ENCODE measurements at regions of chr2 and their contacts with region 1.

Region 1: DNA sequence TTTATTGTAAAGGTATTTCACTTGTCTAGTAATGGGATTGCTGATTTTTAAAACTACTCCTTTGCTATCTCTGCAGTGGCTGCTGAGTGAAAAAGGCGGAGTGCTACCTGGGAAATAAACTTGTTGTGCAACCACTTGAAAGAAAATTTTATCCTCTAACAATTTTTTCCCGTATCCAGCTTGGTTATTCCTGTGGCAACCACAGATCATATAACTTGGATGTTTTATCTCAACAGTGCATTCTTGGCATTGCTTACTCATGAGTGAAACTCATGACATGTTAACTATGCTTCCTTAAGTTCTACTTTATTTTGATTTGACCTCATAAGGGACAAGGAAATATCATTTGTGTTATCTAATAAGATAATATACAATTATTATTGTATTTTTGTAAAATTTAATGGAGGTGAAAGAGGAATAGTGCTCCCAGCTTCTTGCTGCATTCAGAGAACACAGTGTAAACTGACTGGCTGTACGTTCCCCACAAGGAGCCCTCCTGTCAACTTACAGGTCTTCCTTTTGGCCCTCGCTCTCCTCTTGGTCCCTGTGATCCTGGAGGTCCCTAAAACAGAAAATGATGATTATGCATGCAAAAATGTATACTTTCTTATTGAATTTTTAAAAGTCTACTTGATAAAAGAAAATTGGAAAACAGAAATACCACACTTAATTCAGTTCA is 82.7 kb downstream of the COL5A2 start:
- DNase-seq: no peak
- H3K4me3 ChIP-seq: no peak overlapping the region
- CTCF ChIP-seq: no peak
- POLR2A ChIP-seq: no peak

Region 2: GRCh38 chr2:188678882-188679281 is 418.0 kb before region 1 on chr2:
- intact Hi-C with region 1: no loop called
- DNase-seq: no peak
- H3K4me3 ChIP-seq: no peak overlapping the region
- CTCF ChIP-seq: no peak
- POLR2A ChIP-seq: no peak

Region 3: GRCh38 chr2:188746727-188747126 is 350.2 kb before region 1 on chr2:
- intact Hi-C with region 1: no loop called
- DNase-seq: no peak
- H3K4me3 ChIP-seq: no peak overlapping the region
- CTCF ChIP-seq: no peak
- POLR2A ChIP-seq: no peak

Region 4: DNA sequence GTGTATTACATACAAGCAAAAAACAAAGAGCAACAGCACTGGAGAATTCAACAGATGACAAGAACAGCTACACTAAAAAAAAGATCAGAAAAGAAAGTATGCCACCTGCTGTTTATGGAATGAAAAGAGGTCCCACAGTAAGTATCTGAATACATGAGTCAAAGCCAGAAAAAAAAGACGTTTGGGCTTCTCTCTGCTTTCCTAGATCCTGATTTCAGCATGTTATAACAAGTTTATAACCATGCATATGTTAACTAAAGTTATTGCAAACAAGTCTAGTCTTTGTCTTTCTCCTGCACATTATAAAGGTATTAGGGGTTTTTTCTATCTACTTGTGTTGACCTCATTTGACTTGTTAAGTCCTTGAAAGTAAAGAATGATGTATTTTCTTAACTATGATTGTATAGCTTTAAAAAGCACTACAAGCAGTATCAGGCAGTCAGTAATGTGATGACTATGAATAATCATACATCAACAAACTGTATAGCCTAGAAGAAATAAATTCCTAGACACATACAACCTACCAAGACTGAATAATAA is 191.1 kb after region 1 on chr2:
- intact Hi-C with region 1: loop called (anchors 10 kb)
- DNase-seq: no peak
- H3K4me3 ChIP-seq: no peak overlapping the region
- CTCF ChIP-seq: no peak
- POLR2A ChIP-seq: no peak

Measured in lower leg skin (tissue), 4 donors.